Lower leg skin (tissue), 4 donors: ENCODE measurements at regions of chr2 and their contacts with region 1.

Region 1: DNA sequence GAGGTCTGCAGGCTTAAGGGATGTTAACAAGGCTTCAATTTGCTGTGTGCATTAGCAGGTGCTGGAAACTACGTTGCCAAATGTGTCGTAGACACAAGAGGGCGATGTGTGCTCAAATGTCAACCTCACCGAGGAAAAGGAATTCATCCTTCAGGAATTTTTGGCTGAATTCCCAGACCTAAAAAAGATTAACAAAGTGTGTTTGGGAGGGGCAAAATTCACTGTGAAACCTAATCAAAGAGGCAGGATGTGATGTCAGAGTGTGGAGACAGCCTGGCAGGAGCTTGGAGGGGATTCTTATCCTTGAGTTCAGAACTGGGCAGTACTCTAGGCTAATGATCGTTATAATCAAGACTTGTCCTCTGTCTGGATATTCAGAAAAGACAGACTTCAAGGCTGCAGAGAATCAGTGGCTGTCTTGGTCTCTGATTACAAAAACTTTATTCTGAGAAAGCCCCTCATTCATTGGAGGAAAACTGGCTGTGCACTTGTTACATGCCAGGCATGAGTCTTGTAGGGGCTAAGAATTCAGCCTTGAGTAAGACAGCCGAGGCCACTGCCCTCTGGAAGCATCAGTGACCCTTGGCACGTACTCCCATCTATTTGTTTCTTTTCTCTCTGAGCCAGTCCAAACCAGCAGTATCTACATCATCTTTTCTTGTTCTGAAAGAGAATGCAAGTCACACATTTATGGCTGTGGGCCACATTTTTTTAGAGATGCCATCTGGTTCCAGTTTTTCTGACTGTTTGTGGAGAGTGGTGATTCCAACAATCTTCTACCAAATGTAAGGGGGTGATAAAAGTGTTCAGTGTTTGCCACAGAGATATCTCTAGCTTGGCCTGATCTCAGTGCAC is 18.7 kb upstream of the SCYGR1 start:
- DNase-seq: peak; percentile 52 to 84
- H3K4me3 ChIP-seq: no peak overlapping the region
- CTCF ChIP-seq: no peak
- POLR2A ChIP-seq: no peak

Region 2: GRCh38 chr2:227766373-227766883 is 360.0 kb after region 1 on chr2:
- intact Hi-C with region 1: loop called (anchors 10 kb)
- DNase-seq: peak; percentile 59 to 95
- H3K4me3 ChIP-seq: no peak overlapping the region
- CTCF ChIP-seq: peak in 1 of 3 donors; percentile 7
- POLR2A ChIP-seq: no peak